Gastrocnemius medialis (tissue), 4 donors: ENCODE measurements at regions of chr12 and their contacts with region 1.

Region 1: DNA sequence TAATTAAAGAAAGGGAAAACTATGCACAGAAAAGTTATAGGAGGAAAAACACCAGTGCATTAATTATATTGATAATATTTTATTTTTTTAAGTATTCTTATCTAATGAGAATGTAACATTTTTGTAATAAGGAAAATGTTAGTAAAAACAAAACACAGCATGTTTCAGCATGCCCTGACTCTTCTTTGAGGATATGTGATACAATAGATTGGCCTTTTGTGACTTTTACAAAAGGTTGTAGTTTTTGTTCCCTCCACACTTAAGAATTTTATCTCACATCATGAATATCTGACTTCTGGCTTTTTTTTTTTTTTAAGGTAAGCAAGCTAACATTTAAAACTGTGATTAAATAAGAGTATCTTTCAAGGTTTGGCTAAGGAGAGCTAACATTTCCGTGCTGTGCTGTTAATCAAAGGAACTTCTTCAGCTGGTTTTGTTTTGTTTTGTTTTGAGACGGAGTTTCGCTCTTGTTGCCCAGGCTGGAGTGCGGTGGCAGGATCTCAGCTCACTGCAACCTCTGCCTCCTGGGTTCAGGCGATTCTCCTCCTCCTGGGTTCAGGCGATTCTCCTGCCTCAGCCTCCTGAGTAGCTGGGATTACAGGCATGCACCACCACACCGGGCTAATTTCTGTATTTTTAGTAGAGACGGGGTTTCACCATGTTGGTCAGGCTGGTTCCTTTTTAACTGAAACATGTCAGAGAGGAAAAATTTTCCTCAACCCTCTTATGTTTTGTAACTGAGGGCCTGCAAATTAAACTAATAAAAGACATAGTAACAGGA is 30.8 kb upstream of the RESF1 start:
- DNase-seq: no peak
- ATAC-seq: no peak
- H3K4me3 ChIP-seq: no peak overlapping the region
- H3K27ac ChIP-seq: no peak overlapping the region
- H3K4me1 ChIP-seq: no peaks in the 10 kb centered on the region
- H3K27me3 ChIP-seq: peaks cover 0 to 3% (median 0%) of the 10 kb centered on the region in 3 donors
- CTCF ChIP-seq: no peak
- POLR2A ChIP-seq: no peak

Region 2: DNA sequence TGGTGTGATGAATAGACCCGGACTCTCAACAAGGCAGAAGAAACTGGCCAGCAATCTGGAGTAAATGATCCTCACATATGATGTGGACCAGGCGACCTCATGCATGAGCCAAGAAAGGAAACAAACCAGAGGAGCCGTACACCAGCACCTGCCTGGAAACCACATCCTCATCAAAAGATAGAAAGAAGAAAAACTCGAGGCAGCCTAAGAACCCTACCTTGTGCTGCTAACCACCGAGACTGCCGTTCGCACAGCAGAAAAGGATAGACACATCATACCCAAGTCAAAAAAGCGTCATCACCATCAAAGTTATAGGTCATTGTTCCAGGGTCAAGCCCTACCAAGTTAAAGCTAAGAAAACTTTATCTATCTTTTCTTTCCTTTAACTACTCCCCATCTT is 97.5 kb after region 1 on chr12:
- in situ Hi-C with region 1: loop called in 1 of 4 experiments (anchors 25 kb)
- intact Hi-C with region 1: no loop called
- DNase-seq: no peak
- ATAC-seq: no peak
- H3K4me3 ChIP-seq: no peak overlapping the region
- H3K27ac ChIP-seq: no peak overlapping the region
- H3K4me1 ChIP-seq: no peaks in the 10 kb centered on the region
- H3K27me3 ChIP-seq: no peaks in the 10 kb centered on the region
- CTCF ChIP-seq: no peak
- POLR2A ChIP-seq: no peak

Region 3: DNA sequence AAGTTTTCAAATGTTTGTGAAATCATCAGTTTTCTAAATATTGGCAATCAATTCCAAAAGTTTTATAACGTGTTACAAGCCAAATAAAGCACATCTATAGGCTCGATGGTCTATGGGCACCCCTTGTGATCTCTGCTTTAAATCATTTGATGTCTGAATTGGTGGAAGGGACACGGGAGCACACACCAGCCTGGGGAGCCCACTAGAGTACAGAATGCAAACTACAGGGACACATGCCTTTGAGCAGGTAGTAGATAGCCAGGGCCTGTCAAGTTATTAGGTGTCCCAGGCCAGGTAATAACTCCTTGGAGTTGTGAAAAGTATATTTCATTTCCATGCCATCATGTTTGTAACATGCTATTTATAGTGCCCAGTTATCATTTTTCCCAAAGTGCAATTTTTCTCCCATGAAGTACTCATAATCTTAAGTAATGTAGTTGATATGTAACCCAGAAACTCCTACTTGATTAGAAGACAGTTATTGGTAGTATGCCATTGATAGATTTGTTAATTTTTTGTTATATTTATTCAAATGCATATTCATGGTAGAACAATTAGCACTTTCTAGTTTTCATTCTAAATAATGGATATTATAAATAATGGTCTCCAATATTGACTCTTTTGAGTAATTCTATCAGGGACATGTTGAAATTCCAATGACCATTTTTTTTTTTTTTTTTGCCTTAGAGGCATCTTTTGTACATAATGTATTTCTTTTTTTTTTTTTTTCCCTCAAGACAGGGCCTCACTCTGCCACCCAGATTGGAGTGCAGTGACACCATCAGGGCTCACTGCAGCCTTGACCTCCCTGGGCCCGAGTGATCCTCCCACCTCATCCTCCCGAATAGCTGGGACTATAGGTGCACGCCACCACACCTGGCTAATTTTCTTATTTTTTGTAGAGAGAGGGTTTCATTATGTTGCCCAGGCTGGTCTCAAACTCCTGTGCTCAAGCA is 374.1 kb after region 1 on chr12:
- in situ Hi-C with region 1: no loop called
- intact Hi-C with region 1: no loop called
- DNase-seq: no peak
- ATAC-seq: no peak
- H3K4me3 ChIP-seq: no peak overlapping the region
- H3K27ac ChIP-seq: no peak overlapping the region
- H3K4me1 ChIP-seq: peaks cover 0 to 3% of the 10 kb centered on the region in 2 donors
- H3K27me3 ChIP-seq: no peaks in the 10 kb centered on the region
- CTCF ChIP-seq: no peak
- POLR2A ChIP-seq: no peak